Heart right ventricle (tissue), 16 donors: ENCODE measurements at regions of chr1 and their contacts with region 1.

Region 1: DNA sequence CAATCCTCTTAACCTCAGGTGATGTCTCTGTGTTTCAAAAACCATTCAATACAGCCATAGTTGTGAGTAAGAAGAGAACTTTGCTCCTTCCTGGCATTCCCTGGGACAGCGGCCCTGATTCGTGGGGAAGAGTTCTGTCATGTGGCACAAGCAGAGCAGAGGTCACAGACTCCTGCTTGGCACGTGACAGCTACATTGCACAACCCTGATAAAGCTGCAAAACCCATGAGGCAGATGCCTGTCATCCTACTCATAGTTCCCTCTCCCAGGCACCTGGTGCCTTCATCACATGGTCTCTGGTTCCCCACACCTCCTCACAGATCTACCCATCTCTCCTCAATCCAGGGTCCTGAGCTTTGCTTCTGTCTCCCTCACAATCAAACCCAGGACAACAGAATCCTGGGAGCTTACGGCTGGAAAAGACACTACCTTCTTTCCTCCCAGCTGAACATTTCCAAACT is 70.8 kb downstream of the PLPP3 start:
- DNase-seq: peak; percentile 48 to 72
- ATAC-seq: peak; percentile 51 to 88 (median 78)
- H3K4me3 ChIP-seq: no peak overlapping the region
- H3K27ac ChIP-seq: peak overlapping the region; percentile 20 to 83 (median 74)
- H3K4me1 ChIP-seq: peaks cover 10 to 91% (median 83%) of the 10 kb centered on the region in 9 donors
- H3K27me3 ChIP-seq: no peaks in the 10 kb centered on the region
- CTCF ChIP-seq: no peak

Region 2: DNA sequence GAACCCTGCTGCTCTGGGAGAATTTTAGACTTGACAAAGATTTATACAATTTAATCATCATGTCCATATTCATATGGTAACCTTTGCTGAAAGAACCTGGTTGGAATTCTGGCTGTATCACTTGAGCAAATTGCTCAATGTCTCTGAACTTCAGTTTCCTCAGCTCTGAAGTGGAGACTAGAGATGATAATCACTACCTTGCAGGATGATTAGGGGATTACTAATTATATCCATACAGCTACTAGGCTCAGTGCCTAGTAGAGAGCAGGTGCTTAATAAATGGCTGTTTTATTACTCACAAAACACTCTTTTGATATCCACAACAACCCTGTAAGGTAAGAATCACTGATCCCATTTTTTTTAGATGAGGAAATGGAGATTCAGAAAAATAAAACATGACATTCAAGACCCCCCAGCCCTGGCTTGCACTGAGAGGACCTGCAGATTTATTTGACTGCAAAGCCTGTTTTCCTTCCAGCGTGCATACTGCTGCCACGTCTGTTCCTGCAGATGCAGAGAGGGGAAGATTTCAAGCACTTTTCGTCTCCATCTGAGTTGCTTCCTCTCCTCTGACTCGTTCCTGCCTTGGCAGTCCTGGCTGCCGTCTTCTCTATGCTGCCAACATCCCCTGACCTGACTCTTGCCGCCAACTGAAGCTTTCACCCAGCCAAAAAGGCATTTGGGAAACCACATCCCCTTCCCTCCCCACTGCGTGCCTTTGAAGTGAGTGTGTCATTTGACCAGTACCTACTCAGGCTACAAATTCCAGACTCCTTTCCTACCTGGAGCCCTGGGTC is 132.2 kb before region 1 on chr1:
- intact Hi-C with region 1: loop called in 1 of 10 experiments (anchors 5 kb)
- DNase-seq: peak in 1 of 2 donors; percentile 41
- ATAC-seq: peak; percentile 26 to 75 (median 54)
- H3K4me3 ChIP-seq: peak overlapping the region in 1 of 10 donors; percentile 2
- H3K27ac ChIP-seq: peak overlapping the region in 9 of 10 donors; percentile 3 to 82 (median 65)
- H3K4me1 ChIP-seq: peaks cover 18 to 67% (median 52%) of the 10 kb centered on the region in 9 donors
- H3K27me3 ChIP-seq: peaks cover 0 to 7% (median 0%) of the 10 kb centered on the region in 7 donors
- CTCF ChIP-seq: no peak

Region 3: DNA sequence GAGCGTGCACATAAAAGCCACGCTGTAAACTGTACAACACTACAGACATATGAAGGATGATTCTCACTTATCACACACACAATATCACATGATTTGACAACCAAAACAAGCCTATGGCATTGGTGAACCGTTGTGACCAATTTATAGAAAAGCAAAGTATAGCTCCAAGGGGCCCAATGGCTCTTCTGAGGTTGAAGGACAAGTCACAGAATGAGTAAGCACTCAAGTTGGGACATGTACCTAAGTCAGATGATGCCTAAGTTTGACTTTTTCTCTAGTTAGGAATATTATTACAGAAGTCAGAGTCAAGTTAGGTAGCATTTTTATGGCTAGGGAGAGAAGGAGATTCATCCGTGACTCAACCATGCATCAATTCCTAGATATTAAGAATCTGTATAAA is 25.1 kb after region 1 on chr1:
- intact Hi-C with region 1: loop called in 1 of 10 experiments (anchors 1 kb)
- DNase-seq: no peak
- ATAC-seq: no peak
- H3K4me3 ChIP-seq: no peak overlapping the region
- H3K27ac ChIP-seq: peak overlapping the region in 5 of 10 donors; percentile 28 to 77 (median 31)
- H3K4me1 ChIP-seq: peaks cover 20 to 100% (median 98%) of the 10 kb centered on the region in 9 donors
- H3K27me3 ChIP-seq: no peaks in the 10 kb centered on the region
- CTCF ChIP-seq: no peak

Region 4: GRCh38 chr1:56547953-56548352 is 39.4 kb after region 1 on chr1:
- intact Hi-C with region 1: loop called in 1 of 10 experiments (anchors 5 kb)
- DNase-seq: peak; percentile 34 to 51
- ATAC-seq: peak in 6 of 8 donors; percentile 39 to 69 (median 50)
- H3K4me3 ChIP-seq: no peak overlapping the region
- H3K27ac ChIP-seq: peak overlapping the region in 9 of 10 donors; percentile 24 to 85 (median 69)
- H3K4me1 ChIP-seq: peaks cover 42 to 99% (median 92%) of the 10 kb centered on the region in 9 donors
- H3K27me3 ChIP-seq: no peaks in the 10 kb centered on the region
- CTCF ChIP-seq: no peak